Dorsolateral prefrontal cortex (tissue), 120 donors: ENCODE measurements at regions of chr18 and their contacts with region 1.

Region 1: DNA sequence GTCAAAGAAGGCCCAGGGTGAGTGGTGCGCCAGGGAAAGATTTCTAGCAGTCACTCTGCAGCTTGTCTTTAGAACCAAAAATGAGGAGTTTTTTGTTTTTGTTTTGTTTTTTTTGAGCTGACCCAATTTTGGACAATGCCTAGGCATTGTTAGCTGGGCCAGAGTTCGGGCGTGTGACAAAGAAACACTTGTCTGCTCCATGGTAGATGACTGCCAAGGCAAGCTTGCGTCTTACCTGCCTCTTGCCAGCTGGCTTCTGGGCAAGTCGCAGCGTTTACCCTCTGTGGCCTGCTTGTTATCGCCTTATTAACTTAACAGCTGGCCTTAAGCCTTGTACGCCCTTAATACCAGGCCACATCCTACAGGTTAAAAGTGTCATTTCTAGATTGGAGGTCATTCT is 114.3 kb downstream of the GALNT1 start:
- DNase-seq: peak; percentile 55 to 89 (median 83)
- H3K4me3 ChIP-seq: peak overlapping the region in 4 of 59 donors; percentile 1 to 23 (median 5)
- H3K27ac ChIP-seq: peak overlapping the region in 56 of 59 donors; percentile 2 to 81 (median 59)
- H3K27me3 ChIP-seq: no peaks in the 10 kb centered on the region
- CTCF ChIP-seq: peak in 6 of 56 donors; percentile 9 to 31 (median 22)

Region 2: DNA sequence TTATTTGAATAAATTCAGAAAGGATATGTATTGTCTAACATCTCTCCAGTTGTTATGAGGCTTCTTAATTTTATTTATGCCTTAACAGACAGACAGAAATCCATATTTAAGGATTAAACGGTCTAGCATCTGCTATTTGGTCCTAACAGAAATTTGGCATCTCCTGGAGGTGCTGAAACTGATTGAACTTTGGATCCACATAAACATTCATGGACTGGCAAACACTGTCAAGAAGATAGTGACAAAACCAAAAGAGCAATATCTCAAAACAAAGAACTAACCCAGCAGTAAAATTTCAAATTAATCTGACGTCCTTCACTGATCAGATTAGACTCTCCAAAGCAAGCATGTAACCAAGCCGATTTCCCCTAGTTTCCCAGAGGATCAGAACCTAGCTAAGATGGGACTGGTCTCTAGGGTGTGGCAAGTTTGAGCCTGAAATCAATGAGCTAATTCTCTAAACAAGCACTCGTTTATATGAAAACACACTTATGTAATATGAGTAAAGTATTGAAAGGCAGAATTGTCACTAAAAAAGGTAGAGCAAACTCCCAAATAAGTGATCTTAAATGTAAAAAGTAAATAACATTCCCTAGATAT is 1610.6 kb before region 1 on chr18:
- intact Hi-C with region 1: no loop called
- DNase-seq: no peak
- H3K4me3 ChIP-seq: no peak overlapping the region
- H3K27ac ChIP-seq: no peak overlapping the region
- H3K27me3 ChIP-seq: no peaks in the 10 kb centered on the region
- CTCF ChIP-seq: no peak

Region 3: DNA sequence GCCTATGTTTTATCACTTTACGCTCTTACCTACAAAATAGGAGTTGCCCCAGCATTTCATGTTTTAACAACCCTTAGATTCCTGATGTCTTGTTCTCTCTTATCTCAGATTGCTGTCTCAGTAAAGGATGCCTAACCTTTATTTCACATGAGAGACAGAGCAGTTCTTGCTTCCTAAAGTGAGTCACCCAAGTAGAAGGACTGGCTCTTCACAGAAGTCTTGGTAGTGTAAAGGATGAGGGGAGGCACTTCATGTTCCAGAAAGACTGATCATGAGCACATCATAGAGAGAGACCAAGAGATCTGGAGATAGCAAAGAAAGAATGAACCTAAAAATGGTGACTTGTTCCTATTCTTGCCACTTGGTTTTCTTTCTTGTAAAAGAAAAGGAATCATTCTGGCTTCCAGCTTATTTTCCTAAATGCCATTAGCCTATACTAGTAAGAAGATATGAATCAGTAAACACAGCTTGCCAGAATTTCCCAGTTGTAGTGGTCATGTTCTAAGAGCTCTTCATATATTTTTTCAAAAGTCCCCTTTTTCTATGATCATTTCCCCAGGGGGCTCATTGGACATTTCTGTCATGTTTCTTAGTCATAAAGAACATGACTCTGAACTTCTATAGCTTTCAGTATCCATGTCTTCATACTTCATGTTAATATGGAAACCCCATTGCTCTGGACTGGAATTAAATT is 599.7 kb before region 1 on chr18:
- intact Hi-C with region 1: loop called in 1 of 2 experiments (anchors 10 kb)
- DNase-seq: no peak
- H3K4me3 ChIP-seq: no peak overlapping the region
- H3K27ac ChIP-seq: peak overlapping the region in 49 of 59 donors; percentile 0 to 83 (median 46)
- H3K27me3 ChIP-seq: no peaks in the 10 kb centered on the region
- CTCF ChIP-seq: no peak

Region 4: GRCh38 chr18:35497370-35498197 is 198.2 kb before region 1 on chr18 and contains the start of gene INO80C:
- intact Hi-C with region 1: loop called (anchors 5 to 10 kb)
- DNase-seq: peak; percentile 73 to 91 (median 88)
- H3K4me3 ChIP-seq: peak within 1 kb of the TSS; percentile 52 to 92 (median 76)
- H3K27ac ChIP-seq: peak within 1 kb of the TSS; percentile 75 to 99 (median 94)
- H3K27me3 ChIP-seq: no peaks in the 10 kb centered on the region
- CTCF ChIP-seq: peak in 34 of 56 donors; percentile 5 to 51 (median 20)
- total RNA-seq, gene INO80C: 13.8 to 40.5 (median 27.1) TPM

Region 5: GRCh38 chr18:35580701-35581539 is 114.9 kb before region 1 on chr18:
- intact Hi-C with region 1: loop called (anchors 2 to 10 kb)
- DNase-seq: peak; percentile 35 to 78 (median 53)
- H3K4me3 ChIP-seq: peak overlapping the region; percentile 58 to 93 (median 79)
- H3K27ac ChIP-seq: peak overlapping the region; percentile 70 to 98 (median 94)
- H3K27me3 ChIP-seq: no peaks in the 10 kb centered on the region
- CTCF ChIP-seq: peak in 2 of 56 donors; percentile 11 to 14

Region 6: DNA sequence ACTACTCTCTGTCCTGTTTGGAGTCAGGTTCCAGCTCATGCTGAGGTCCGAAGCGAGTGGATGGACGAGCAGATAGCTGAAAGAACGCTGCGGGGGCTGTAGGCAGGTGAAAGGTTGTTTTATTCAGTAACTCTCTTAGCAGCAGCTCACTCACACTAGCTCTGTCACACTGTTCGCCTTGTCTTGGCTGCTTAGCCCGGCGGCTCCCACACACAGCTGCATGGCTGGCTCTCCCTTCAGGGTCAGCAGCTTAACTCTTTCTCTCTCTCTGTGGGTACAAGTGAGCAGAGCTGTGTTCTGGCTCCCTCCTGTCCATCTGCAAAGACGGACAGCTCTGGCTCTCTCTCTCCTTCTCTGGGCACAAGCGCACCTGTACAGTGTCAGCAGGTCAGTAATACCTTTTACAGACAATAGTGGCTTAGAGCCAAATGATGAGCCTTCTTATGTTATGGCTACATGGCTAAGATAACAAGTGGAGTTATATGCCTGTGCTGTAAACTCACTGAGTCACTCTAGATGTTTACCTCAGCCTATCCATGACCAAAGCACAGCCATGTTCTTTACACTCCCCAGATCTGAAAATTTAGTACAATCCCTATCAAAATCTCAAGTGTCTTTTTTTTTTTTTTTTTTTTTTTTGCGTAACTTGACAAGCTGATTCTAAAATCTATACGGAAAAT is 35.0 kb after region 1 on chr18:
- intact Hi-C with region 1: no loop called
- DNase-seq: no peak
- H3K4me3 ChIP-seq: peak overlapping the region in 28 of 59 donors; percentile 1 to 52 (median 24)
- H3K27ac ChIP-seq: no peak overlapping the region
- H3K27me3 ChIP-seq: no peaks in the 10 kb centered on the region
- CTCF ChIP-seq: no peak

Region 7: DNA sequence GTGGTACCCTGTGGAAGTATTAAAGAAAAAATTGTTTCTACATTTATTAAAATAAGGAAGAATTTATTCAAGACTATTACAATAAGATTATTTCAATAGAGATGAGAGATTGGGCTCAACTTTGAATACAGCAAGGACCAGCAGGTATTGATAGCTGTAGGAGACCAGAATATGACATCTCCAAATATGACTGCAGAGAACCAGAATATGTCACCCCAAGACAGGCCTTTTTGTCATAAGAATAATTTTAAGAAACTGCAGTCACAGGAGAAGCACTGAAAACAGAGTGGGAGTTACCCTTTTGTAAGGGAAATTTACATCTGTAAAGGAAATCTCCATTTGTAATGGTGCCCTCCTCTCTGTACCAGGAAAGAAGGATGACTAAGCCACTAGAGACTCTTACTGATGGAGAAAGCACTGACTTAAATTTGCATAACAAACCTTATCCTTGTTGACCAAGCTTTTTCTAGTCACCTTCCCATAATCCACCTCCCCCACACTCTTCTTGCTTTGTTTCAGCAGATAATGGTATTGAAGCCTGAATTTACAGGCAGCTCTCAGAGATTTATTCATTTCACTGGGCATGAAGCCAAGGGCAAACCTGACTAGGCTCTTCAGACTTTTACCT is 131.6 kb after region 1 on chr18:
- intact Hi-C with region 1: no loop called
- DNase-seq: no peak
- H3K4me3 ChIP-seq: no peak overlapping the region
- H3K27ac ChIP-seq: no peak overlapping the region
- H3K27me3 ChIP-seq: peaks cover 0 to 6% (median 0%) of the 10 kb centered on the region in 45 donors
- CTCF ChIP-seq: no peak